Activated B cell treated with CpG ODN at 0.5 μM for 24 hours (primary cell): ENCODE measurements at regions of chr11 and their contacts with region 1.

Region 1: GRCh38 chr11:83156150-83156995 is 558 bp upstream of the PCF11 start:
- DNase-seq: peak; percentile 82
- ATAC-seq: peak; percentile 88
- H3K4me3 Mint-ChIP-seq: peak overlapping the region; percentile 100
- H3K27ac Mint-ChIP-seq: peak overlapping the region; percentile 100
- H3K4me1 Mint-ChIP-seq: peaks cover 34% of the 10 kb centered on the region
- H3K27me3 Mint-ChIP-seq: no peaks in the 10 kb centered on the region
- CTCF ChIP-seq: no peak

Region 2: GRCh38 chr11:82663535-82663934 is 492.8 kb before region 1 on chr11:
- CTCF ChIA-PET with region 1: no interaction called
- POLR2A ChIA-PET with region 1: no interaction called
- intact Hi-C with region 1: no loop called
- DNase-seq: no peak
- ATAC-seq: no peak
- H3K4me3 Mint-ChIP-seq: no peak overlapping the region
- H3K27ac Mint-ChIP-seq: no peak overlapping the region
- H3K4me1 Mint-ChIP-seq: no peaks in the 10 kb centered on the region
- H3K27me3 Mint-ChIP-seq: peaks cover 3% of the 10 kb centered on the region
- CTCF ChIP-seq: no peak

Region 3: DNA sequence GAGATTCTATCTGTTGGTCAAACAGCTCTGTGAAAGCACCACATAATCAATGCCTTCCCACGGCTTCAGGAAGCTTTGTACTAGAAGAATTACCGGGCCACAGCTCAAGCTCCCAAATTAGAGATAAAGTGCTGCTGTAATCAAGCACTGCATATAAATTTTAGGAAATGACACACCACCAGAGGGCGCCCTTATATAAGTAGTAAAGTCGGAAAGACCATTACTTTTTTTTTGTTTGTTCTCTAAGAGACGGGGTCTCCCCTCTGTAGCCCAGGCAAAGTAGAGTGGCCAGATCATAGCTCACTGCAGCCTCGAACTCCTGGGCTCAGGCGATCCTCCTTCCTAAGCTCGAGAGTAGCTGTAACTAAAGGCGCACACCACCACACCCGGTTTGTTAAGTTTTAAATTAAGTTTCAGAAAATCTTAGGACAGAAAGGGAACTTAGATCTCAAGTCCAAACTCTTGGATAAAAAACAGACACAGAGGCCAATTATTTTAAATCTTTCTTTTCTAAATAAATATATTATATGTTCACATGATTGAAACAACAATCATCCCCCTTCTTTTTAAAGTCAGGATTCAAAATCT is 288.8 kb before region 1 on chr11:
- CTCF ChIA-PET with region 1: interaction called, 14 read pairs
- POLR2A ChIA-PET with region 1: no interaction called
- intact Hi-C with region 1: no loop called
- DNase-seq: peak; percentile 37
- ATAC-seq: peak; percentile 61
- H3K4me3 Mint-ChIP-seq: peak overlapping the region; percentile 73
- H3K27ac Mint-ChIP-seq: peak overlapping the region; percentile 71
- H3K4me1 Mint-ChIP-seq: peaks cover 9% of the 10 kb centered on the region
- H3K27me3 Mint-ChIP-seq: no peaks in the 10 kb centered on the region
- CTCF ChIP-seq: peak; percentile 50

Region 4: DNA sequence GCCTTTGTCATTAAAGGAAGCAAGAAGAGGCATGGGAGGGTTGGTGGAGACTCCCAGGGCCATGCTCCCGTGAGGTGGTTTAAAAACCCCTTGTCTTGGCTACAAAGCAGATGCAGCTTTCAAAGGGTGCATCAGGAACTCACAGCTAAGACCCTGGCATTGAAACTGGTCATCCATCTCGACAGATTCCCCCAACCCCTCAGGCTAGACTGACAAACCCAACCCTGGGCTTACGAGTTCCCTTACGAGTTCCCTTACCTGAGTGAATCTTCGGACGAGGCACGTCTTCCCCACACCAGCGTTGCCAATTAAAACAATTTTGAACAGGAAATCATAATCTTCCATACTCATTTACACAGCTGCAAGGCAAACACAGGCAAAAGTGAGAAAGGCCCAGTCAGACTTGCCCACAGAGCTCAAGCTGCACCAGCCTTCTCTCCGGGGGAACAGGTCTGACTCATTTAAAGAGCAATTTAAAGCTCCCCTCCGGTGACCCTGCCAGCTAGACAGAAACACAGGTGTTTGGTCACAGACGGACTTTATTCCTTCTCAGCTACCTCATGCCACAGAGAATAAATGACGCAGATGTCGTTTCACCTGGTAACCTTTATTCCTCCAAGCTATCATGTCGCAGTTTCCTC is 159.3 kb before region 1 on chr11:
- CTCF ChIA-PET with region 1: no interaction called
- POLR2A ChIA-PET with region 1: interaction called, 26 read pairs
- intact Hi-C with region 1: loop called (anchors 1 kb)
- DNase-seq: no peak
- ATAC-seq: peak; percentile 88
- H3K4me3 Mint-ChIP-seq: peak overlapping the region; percentile 75
- H3K27ac Mint-ChIP-seq: peak overlapping the region; percentile 84
- H3K4me1 Mint-ChIP-seq: peaks cover 93% of the 10 kb centered on the region
- H3K27me3 Mint-ChIP-seq: no peaks in the 10 kb centered on the region
- CTCF ChIP-seq: no peak

Region 5: GRCh38 chr11:83063073-83063754 is 93.2 kb before region 1 on chr11:
- CTCF ChIA-PET with region 1: no interaction called
- POLR2A ChIA-PET with region 1: interaction called, 119 read pairs
- intact Hi-C with region 1: loop called (anchors 1 kb)
- DNase-seq: no peak
- ATAC-seq: peak; percentile 72
- H3K4me3 Mint-ChIP-seq: peak overlapping the region; percentile 87
- H3K27ac Mint-ChIP-seq: no peak overlapping the region
- H3K4me1 Mint-ChIP-seq: peaks cover 94% of the 10 kb centered on the region
- H3K27me3 Mint-ChIP-seq: no peaks in the 10 kb centered on the region
- CTCF ChIP-seq: no peak

Region 6: GRCh38 chr11:83140696-83141455 is 15.5 kb before region 1 on chr11:
- CTCF ChIA-PET with region 1: no interaction called
- POLR2A ChIA-PET with region 1: interaction called, 8 read pairs
- intact Hi-C with region 1: loop called (anchors 2 kb)
- DNase-seq: no peak
- ATAC-seq: peak; percentile 78
- H3K4me3 Mint-ChIP-seq: no peak overlapping the region
- H3K27ac Mint-ChIP-seq: no peak overlapping the region
- H3K4me1 Mint-ChIP-seq: peaks cover 8% of the 10 kb centered on the region
- H3K27me3 Mint-ChIP-seq: no peaks in the 10 kb centered on the region
- CTCF ChIP-seq: no peak

Region 7: DNA sequence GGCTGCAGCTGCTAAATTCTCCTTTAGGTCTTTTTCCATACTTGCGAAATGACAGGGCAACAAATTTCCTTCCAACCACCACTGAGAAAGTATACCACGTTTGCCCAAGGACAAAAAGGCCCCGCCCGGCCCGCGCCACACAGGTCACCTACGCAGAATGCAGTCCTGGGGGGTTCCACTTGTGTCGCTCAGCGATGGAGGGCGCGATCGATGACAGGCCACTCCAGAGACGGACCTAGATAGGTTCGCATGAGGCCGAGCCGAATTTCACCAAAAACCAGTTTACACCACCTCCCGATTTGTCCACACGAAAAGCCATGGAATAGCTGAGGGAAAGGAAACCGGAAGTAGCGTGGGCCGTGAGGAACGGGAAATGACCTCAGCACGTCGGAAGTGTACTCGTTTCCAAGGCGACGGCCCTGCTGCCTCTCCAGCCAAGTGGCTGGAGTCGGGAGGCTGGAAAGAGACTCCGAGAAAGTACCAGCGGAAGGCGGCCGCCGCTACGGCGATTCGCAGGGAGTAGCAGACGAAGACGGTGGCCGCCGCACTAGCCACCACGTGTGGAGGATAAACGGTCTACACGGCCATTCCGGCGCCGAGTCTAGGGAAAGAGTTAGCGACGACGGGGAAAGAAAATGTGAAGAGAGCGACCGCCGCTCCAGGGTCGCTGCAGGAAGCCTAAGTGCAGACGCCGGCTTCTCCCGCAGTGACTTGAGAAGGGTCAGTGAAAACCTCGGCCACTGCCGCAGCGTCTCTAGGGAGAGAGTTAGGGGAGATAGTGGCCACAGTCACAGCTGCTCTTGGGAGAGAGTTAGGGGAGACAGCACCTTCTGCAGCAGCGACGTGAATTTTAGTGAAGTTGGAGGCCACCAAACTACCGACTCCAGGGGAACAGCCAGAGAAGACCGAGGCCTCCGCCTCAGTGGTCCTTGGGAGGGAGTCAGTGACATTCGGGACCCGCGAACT is 37.2 kb after region 1 on chr11 and contains the start of gene ANKRD42:
- CTCF ChIA-PET with region 1: no interaction called
- POLR2A ChIA-PET with region 1: interaction called, 22 read pairs
- intact Hi-C with region 1: loop called (anchors 1 kb)
- DNase-seq: peak; percentile 75
- ATAC-seq: peak; percentile 63
- H3K4me3 Mint-ChIP-seq: peak within 1 kb of the TSS; percentile 100
- H3K27ac Mint-ChIP-seq: peak within 1 kb of the TSS; percentile 98
- H3K4me1 Mint-ChIP-seq: peaks cover 51% of the 10 kb centered on the region
- H3K27me3 Mint-ChIP-seq: no peaks in the 10 kb centered on the region
- CTCF ChIP-seq: no peak
- total RNA-seq, gene ANKRD42: 6.6 and 7.4 TPM in 2 replicates

Region 8: GRCh38 chr11:83881445-83881844 is 725.1 kb after region 1 on chr11:
- CTCF ChIA-PET with region 1: no interaction called
- POLR2A ChIA-PET with region 1: no interaction called
- intact Hi-C with region 1: no loop called
- DNase-seq: no peak
- ATAC-seq: no peak
- H3K4me3 Mint-ChIP-seq: no peak overlapping the region
- H3K27ac Mint-ChIP-seq: no peak overlapping the region
- H3K4me1 Mint-ChIP-seq: no peaks in the 10 kb centered on the region
- H3K27me3 Mint-ChIP-seq: no peaks in the 10 kb centered on the region
- CTCF ChIP-seq: no peak